Naive thymus-derived CD4-positive, alpha-beta T cell (primary cell): ENCODE measurements at regions of chr5 and their contacts with region 1.

Region 1: DNA sequence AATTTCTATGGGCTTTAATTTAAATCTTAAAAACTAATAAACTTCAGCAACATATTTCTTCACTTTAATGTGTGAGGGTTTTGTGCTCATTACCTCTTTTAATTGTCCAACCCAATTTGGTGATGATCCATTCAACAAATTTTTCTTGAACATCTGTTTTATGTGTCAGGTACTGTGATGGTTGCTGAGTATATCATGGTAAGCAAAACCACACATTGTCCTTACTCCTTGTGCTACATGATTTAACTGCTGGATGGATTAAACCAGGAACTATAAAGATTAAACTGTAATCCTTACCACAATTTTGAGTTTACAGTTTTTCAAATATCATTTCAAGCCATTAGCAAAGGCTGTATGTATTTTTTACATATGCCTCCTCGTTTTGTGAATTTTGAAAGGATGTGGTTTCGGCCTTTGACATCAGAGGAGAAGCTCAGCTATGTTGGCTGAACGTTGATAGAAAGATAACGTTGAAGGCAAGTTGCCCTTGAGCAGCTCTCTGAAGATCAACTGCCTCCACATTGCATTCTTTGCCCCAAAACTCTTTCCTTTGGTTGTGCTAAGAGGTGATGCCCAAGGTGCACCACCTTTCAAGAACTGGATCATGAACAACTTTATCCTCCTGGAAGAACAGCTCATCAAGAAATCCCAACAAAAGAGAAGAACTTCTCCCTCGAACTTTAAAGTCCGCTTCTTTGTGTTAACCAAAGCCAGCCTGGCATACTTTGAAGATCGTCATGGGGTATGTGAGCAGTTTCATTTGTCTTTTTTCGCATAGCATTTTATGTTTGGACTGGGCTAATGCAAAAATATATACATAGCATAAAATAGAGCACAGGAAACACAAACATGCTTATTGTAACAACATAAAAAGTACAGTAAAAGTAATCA is at the start of gene ITK:
- DNase-seq: peak in 7 of 9 donors; percentile 66 to 84 (median 77)
- ATAC-seq: peak; percentile 88
- H3K4me3 ChIP-seq: peak within 1 kb of the TSS; percentile 62
- H3K4me3 Mint-ChIP-seq: peak within 1 kb of the TSS; percentile 89 to 100 (median 97)
- H3K27ac ChIP-seq: peak within 1 kb of the TSS; percentile 81
- H3K27ac Mint-ChIP-seq: peak within 1 kb of the TSS; percentile 91 to 99 (median 96)
- H3K4me1 ChIP-seq: peaks cover 33 to 42% of the 10 kb centered on the region in 2 donors
- H3K4me1 Mint-ChIP-seq: peaks cover 27 to 61% (median 50%) of the 10 kb centered on the region in 7 donors
- H3K27me3 ChIP-seq: no peaks in the 10 kb centered on the region
- H3K27me3 Mint-ChIP-seq: no peaks in the 10 kb centered on the region
- total RNA-seq, gene ITK: 278 to 481 (median 324) TPM

Region 2: DNA sequence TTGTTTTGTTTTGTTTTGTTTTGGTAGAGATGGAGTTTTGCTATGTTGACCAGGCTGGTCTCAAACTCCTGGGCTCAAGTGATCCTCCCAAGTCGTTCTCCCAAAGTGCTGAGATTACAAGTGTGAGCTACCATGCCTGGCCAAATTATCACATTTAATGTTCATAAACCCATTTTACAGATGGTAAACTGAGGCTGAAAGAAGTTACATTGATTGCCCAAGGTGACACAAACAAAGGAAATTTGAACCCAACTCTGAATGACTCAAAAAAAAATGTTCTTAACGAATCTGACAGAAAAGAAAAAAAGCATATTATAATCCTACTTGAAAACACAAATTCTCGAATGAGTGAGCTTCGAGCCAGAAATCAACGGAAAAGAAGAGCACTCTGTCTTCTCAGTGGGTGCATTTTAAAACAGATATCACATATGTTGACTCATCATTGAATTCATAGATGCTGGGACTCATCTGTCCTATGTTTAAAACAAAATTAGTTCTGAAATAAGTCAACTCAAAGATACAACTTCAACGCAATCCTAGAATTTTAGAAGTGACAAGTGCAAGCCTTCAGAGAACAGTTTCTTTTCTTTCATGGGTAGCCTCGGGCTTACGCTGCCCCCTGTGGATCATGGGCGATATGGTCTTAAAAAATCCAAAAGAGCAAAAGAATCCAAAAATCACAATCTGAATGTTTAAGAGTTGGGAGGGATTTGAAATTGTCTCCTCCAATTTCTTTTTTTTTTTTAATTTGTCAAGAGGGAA is 246.0 kb before region 1 on chr5:
- CTCF ChIA-PET with region 1: no interaction called
- POLR2A ChIA-PET with region 1: no interaction called
- intact Hi-C with region 1: no loop called
- DNase-seq: peak in 8 of 9 donors; percentile 37 to 68 (median 62)
- ATAC-seq: peak; percentile 81
- H3K4me3 ChIP-seq: peak overlapping the region; percentile 25
- H3K4me3 Mint-ChIP-seq: peak overlapping the region in 7 of 10 donors; percentile 17 to 63 (median 54)
- H3K27ac ChIP-seq: no peak overlapping the region
- H3K27ac Mint-ChIP-seq: peak overlapping the region; percentile 36 to 97 (median 60)
- H3K4me1 ChIP-seq: peaks cover 9 to 16% of the 10 kb centered on the region in 2 donors
- H3K4me1 Mint-ChIP-seq: peaks cover 8 to 80% (median 49%) of the 10 kb centered on the region in 7 donors
- H3K27me3 ChIP-seq: no peaks in the 10 kb centered on the region
- H3K27me3 Mint-ChIP-seq: no peaks in the 10 kb centered on the region

Region 3: DNA sequence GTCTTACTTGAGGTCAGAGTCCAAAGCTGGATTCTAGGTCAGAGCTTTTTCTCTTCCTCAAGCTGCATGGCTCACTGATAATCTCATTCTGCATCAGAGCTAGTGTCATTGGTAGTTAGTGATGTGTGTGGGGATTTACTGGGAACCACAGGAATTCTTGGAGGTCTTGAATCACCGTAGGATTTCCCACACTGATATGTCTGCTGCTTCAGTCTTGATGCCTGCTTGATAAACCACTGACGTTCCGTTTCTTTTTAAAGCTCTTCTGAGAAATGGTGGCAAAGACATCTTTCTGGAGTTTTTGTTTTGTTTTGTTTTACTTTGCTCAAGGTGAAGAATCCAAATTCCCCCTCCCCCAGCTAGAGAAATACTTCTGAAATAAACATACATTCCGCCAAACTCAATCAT is 13.4 kb before region 1 on chr5:
- CTCF ChIA-PET with region 1: interaction called, 9 read pairs
- POLR2A ChIA-PET with region 1: interaction called, 27 read pairs
- intact Hi-C with region 1: loop called (anchors 1 kb)
- DNase-seq: no peak
- ATAC-seq: peak; percentile 34
- H3K4me3 ChIP-seq: peak overlapping the region; percentile 21
- H3K4me3 Mint-ChIP-seq: peak overlapping the region; percentile 50 to 81 (median 72)
- H3K27ac ChIP-seq: peak overlapping the region; percentile 62
- H3K27ac Mint-ChIP-seq: peak overlapping the region; percentile 68 to 93 (median 87)
- H3K4me1 ChIP-seq: peaks cover 16 to 33% of the 10 kb centered on the region in 2 donors
- H3K4me1 Mint-ChIP-seq: peaks cover 31 to 78% (median 72%) of the 10 kb centered on the region in 7 donors
- H3K27me3 ChIP-seq: no peaks in the 10 kb centered on the region
- H3K27me3 Mint-ChIP-seq: no peaks in the 10 kb centered on the region

Region 4: DNA sequence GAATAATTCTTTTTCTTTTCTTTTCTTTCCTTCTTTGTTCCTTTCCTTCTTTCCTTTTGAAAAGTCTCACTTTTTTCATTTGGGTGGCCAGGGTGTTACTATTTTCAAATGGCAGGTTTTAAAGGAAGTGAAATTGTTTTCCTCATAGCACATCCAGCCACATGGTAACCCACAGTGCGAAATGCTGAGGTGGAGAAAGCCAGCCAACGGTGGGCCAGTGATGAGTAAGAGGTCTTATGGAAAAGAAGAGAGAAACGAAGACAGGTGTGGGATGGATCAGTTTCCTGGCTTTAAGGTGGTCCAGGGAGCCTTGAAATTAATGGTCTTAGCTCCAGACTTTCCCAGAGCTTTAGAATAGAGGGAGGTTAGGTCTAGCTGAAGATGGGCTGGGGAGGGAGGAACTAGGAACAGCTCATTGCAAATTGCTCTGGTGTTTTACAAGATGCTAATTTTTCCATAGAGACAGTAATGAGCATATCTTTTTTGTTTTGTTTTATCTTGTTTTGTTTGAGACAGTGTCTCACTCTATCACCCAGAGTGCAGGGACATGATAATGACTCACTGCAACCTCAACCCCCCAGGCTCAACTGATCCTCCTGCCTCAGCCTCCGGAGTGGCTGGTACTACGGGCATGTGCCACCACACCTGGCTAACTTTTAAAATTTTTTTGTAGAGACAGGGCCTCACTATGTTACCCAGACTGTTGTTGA is 17.8 kb after region 1 on chr5:
- CTCF ChIA-PET with region 1: interaction called, 3 read pairs
- POLR2A ChIA-PET with region 1: interaction called, 345 read pairs
- intact Hi-C with region 1: loop called (anchors 1 kb)
- DNase-seq: peak in 2 of 9 donors; percentile 58 to 77
- ATAC-seq: peak; percentile 49
- H3K4me3 ChIP-seq: peak overlapping the region; percentile 24
- H3K4me3 Mint-ChIP-seq: peak overlapping the region; percentile 47 to 98 (median 78)
- H3K27ac ChIP-seq: peak overlapping the region; percentile 81
- H3K27ac Mint-ChIP-seq: peak overlapping the region; percentile 78 to 98 (median 87)
- H3K4me1 ChIP-seq: peaks cover 86 to 95% of the 10 kb centered on the region in 2 donors
- H3K4me1 Mint-ChIP-seq: peaks cover 53 to 100% (median 97%) of the 10 kb centered on the region in 7 donors
- H3K27me3 ChIP-seq: no peaks in the 10 kb centered on the region
- H3K27me3 Mint-ChIP-seq: no peaks in the 10 kb centered on the region

Region 5: DNA sequence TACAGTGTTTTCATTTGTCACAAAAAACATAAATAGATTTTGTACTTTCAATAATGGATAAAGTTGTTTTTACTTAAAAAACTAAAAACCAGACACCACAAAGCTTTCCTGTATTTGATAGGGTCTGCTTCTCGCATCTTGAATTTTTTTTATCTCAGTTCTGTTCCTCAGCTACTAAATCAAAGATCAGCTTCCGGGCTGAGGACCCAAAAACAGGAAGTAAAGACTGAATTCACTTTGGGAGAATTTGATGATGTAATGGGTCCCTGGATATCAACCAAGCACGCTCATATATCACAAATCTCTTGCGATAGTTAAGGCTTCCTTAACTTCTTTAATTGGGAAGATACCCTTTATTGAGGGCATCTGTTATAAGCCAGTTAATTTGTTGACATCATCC is 24.1 kb after region 1 on chr5:
- CTCF ChIA-PET with region 1: interaction called, 4 read pairs
- POLR2A ChIA-PET with region 1: interaction called, 345 read pairs
- intact Hi-C with region 1: no loop called
- DNase-seq: peak in 7 of 9 donors; percentile 44 to 84 (median 73)
- ATAC-seq: peak; percentile 69
- H3K4me3 ChIP-seq: peak overlapping the region; percentile 10
- H3K4me3 Mint-ChIP-seq: peak overlapping the region; percentile 7 to 93 (median 76)
- H3K27ac ChIP-seq: peak overlapping the region; percentile 64
- H3K27ac Mint-ChIP-seq: peak overlapping the region; percentile 79 to 98 (median 95)
- H3K4me1 ChIP-seq: peaks cover 77 to 87% of the 10 kb centered on the region in 2 donors
- H3K4me1 Mint-ChIP-seq: peaks cover 43 to 96% (median 90%) of the 10 kb centered on the region in 7 donors
- H3K27me3 ChIP-seq: no peaks in the 10 kb centered on the region
- H3K27me3 Mint-ChIP-seq: no peaks in the 10 kb centered on the region